Lower leg skin (tissue), 4 donors: ENCODE measurements at regions of chr1 and their contacts with region 1.

Region 1: GRCh38 chr1:20850021-20850420 is 62.9 kb upstream of the HP1BP3 start:
- DNase-seq: no peak
- H3K4me3 ChIP-seq: no peak overlapping the region
- CTCF ChIP-seq: no peak
- POLR2A ChIP-seq: no peak

Region 2: DNA sequence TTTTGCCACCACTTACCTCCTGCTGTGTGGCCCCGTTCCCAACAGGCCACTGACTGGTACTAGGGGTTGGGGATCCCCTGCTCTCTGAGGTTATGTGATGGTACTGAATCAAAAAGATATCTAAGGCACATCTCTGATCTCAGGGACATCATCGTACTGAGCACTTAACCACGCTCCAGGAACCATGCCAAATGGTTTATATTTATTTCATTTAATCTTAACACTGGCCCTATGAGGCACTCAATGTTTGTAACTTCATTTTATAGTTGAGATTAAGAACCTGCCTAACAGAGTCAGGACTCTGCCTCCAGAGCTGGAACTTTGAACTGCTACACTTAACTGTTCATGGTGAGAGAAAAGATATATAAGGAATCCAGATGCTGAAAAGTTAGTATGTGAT is 35.1 kb after region 1 on chr1:
- intact Hi-C with region 1: no loop called
- DNase-seq: no peak
- H3K4me3 ChIP-seq: no peak overlapping the region
- CTCF ChIP-seq: no peak
- POLR2A ChIP-seq: no peak

Region 3: DNA sequence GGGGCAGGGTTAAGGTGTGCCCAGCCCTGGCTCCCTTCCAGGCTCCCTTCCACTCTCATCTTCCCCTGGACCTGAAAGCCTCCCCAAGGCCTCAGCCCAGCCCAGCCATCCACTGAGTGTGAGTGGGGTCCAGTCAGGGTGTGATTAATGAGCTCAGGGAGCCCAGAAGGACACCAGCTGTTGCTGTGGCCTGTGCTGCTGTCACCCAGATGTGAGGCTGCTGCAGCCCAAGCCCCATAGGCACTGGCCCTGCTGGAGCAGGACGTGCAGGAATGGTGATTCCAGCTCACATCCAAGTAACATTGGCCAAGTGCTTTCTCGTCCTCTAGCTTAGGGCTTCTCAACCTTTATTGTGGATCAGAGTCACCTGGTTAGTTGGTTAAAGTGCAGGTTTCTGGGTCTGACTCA is 1938.2 kb after region 1 on chr1:
- intact Hi-C with region 1: loop called (anchors 5 kb)
- DNase-seq: no peak
- H3K4me3 ChIP-seq: no peak overlapping the region
- CTCF ChIP-seq: no peak
- POLR2A ChIP-seq: no peak